Activated CD4-positive, alpha-beta T cell treated with anti-CD3 and anti-CD28 coated beads, Interleukin-2, amount 10 ng/mL, durations not matched to agents 24 days and 14 days (primary cell): ENCODE measurements at regions of chr17 and their contacts with region 1.

Region 1: GRCh38 chr17:996554-997344 is at the start of gene TIMM22:
- DNase-seq: peak; percentile 97
- H3K4me3 Mint-ChIP-seq: peak within 1 kb of the TSS; percentile 99
- H3K27ac Mint-ChIP-seq: peak within 1 kb of the TSS; percentile 98
- H3K4me1 Mint-ChIP-seq: peaks cover 18% of the 10 kb centered on the region
- H3K27me3 Mint-ChIP-seq: no peaks in the 10 kb centered on the region
- total RNA-seq, gene TIMM22: 14.7 and 15.7 TPM in 2 replicates

Region 2: DNA sequence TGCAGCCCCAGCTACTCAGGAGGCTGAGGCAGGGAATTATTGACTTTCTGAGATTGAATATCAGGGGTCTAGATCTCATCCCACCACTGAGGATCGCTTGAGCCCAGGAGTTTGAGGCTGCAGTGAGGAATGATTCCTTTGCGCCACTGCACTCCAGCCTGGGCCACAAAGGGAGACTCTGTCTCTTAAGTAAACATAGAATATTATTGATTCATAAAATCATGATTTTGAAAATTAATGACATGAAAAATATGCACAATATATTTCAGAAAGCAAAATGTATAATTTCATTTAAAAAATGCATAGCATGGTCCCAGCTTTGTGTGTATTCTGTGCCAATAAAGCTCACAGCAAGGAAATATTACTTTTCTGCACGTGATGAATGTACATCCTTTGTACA is 280.5 kb before region 1 on chr17:
- intact Hi-C with region 1: loop called (anchors 2 kb)
- DNase-seq: no peak
- H3K4me3 Mint-ChIP-seq: peak overlapping the region; percentile 37
- H3K27ac Mint-ChIP-seq: no peak overlapping the region
- H3K4me1 Mint-ChIP-seq: peaks cover 20% of the 10 kb centered on the region
- H3K27me3 Mint-ChIP-seq: peaks cover 2% of the 10 kb centered on the region

Region 3: GRCh38 chr17:781805-782731 is 214.7 kb before region 1 on chr17 and contains the starts of genes GLOD4 and MRM3:
- intact Hi-C with region 1: loop called (anchors 2 kb)
- DNase-seq: peak; percentile 100
- H3K4me3 Mint-ChIP-seq: peak within 1 kb of the TSS; percentile 96
- H3K27ac Mint-ChIP-seq: peak within 1 kb of the TSS; percentile 92
- H3K4me1 Mint-ChIP-seq: peaks cover 26% of the 10 kb centered on the region
- H3K27me3 Mint-ChIP-seq: no peaks in the 10 kb centered on the region
- total RNA-seq, gene GLOD4: 82.4 and 83.2 TPM in 2 replicates
- total RNA-seq, gene MRM3: 32.5 and 33.1 TPM in 2 replicates

Region 4: DNA sequence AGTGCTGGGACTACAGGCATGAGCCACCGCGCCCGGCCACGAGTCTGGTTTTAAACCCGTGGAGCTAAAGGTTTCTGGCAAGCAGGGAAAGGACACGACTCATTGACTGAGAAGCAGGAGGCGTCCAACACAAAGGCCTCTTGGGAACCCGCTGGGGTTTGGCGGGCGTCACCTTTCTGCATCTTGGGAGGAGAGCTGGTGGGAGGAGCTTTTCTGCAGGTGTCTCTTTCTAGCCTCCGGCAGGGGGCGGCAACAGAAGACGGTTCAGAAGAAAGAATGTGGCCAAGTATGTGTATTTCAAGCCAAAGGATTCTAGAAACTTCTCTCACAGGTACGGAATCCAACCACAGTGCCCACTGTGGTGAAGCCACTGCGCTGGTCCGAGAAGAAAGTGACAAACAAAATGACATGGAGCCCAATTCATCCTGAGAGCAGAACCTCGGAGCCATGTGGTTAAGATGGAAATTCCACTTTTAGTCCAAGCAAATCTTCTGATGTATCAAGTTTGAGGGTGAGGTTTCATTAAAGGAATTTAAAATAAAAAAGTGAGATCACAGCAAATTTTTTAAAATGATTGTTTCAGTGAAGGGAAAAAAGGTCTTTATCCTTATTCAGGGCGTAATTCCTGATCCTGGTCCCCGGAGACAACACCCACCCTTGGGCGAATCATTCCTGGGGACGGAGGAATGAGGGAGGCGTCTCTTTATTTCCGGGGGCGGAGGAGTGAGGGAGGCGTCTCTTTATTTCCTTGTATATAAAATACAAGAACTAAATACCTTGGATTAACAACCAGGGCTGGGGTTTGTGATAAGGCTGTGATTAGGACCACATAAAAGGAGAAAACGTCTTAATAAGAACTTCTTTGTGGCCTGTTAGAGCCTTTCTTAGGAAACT is 117.0 kb before region 1 on chr17:
- intact Hi-C with region 1: loop called (anchors 5 kb)
- DNase-seq: peak; percentile 88
- H3K4me3 Mint-ChIP-seq: no peak overlapping the region
- H3K27ac Mint-ChIP-seq: no peak overlapping the region
- H3K4me1 Mint-ChIP-seq: peaks cover 14% of the 10 kb centered on the region
- H3K27me3 Mint-ChIP-seq: peaks cover 1% of the 10 kb centered on the region